ENCODE measurements at regions of chr6 and their contacts with region 1.

Region 1: DNA sequence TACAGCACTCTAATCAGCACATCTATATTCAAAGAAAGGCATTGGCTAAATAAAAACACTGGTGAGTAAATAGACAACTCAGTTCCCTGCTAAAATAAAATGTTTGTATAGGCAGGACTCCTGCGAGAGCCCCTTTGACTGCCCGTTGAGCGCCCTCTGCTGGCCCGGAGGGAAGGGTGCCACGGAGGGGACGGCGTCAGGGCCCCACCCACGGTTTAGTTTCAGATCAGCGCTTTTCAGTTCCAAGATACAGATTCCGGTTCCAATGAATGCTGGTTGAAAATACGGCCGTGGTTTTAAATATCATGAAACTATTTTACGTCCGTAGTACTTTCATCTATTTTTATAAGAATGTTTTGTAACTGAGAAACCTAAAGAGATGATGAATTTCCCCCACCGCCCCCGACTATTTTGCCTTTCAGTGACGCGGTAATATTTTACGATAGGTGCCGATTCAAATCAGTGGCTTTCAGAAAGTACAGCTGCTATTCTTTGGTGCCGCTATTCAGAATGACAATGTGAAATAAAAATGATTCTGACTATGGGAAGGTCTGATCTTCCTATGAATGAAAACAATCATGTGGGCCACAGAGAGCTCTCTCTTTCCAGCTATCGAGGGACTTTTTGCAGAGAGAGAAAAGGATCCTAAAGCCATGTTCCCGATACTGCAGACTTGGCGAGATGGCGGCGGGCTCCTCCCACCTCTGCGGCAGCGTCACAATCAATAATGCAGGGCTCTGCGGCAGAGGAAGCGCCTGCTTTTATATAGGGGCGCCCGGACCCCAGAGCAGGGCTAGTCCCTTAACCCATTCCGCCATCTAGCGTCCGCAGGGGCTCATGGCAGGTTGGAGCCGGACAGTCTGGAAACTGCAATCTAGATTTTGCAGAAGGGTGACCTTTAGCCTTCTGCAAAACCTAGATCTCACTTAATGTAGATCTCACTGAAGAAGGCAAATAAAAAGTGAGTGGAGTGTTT is 10.6 kb upstream of the CCN6 start:
- DNase-seq: peak; percentile 85 to 95 (median 91)
- ATAC-seq: peak; percentile 92
- H3K4me3 ChIP-seq: peak overlapping the region; percentile 65
- H3K4me3 Mint-ChIP-seq: peak overlapping the region; percentile 97
- H3K27ac ChIP-seq: peak overlapping the region; percentile 88 to 95
- H3K27ac Mint-ChIP-seq: peak overlapping the region; percentile 100
- H3K4me1 ChIP-seq: peaks cover 3% of the 10 kb centered on the region
- H3K4me1 Mint-ChIP-seq: peaks cover 40% of the 10 kb centered on the region
- H3K27me3 ChIP-seq: no peaks in the 10 kb centered on the region
- H3K27me3 Mint-ChIP-seq: no peaks in the 10 kb centered on the region
- CTCF ChIP-seq: peak; percentile 78

Region 2: GRCh38 chr6:111011360-111012142 is 1031.8 kb before region 1 on chr6:
- CTCF ChIA-PET with region 1: no interaction called
- POLR2A ChIA-PET with region 1: no interaction called
- intact Hi-C with region 1: loop called (anchors 10 kb)
- DNase-seq: peak in 4 of 14 experiments; percentile 3 to 64 (median 57)
- ATAC-seq: peak; percentile 82
- H3K4me3 ChIP-seq: no peak overlapping the region
- H3K4me3 Mint-ChIP-seq: no peak overlapping the region
- H3K27ac ChIP-seq: no peak overlapping the region
- H3K27ac Mint-ChIP-seq: no peak overlapping the region
- H3K4me1 ChIP-seq: no peaks in the 10 kb centered on the region
- H3K4me1 Mint-ChIP-seq: peaks cover 5% of the 10 kb centered on the region
- H3K27me3 ChIP-seq: no peaks in the 10 kb centered on the region
- H3K27me3 Mint-ChIP-seq: no peaks in the 10 kb centered on the region
- CTCF ChIP-seq: peak; percentile 78

Region 3: DNA sequence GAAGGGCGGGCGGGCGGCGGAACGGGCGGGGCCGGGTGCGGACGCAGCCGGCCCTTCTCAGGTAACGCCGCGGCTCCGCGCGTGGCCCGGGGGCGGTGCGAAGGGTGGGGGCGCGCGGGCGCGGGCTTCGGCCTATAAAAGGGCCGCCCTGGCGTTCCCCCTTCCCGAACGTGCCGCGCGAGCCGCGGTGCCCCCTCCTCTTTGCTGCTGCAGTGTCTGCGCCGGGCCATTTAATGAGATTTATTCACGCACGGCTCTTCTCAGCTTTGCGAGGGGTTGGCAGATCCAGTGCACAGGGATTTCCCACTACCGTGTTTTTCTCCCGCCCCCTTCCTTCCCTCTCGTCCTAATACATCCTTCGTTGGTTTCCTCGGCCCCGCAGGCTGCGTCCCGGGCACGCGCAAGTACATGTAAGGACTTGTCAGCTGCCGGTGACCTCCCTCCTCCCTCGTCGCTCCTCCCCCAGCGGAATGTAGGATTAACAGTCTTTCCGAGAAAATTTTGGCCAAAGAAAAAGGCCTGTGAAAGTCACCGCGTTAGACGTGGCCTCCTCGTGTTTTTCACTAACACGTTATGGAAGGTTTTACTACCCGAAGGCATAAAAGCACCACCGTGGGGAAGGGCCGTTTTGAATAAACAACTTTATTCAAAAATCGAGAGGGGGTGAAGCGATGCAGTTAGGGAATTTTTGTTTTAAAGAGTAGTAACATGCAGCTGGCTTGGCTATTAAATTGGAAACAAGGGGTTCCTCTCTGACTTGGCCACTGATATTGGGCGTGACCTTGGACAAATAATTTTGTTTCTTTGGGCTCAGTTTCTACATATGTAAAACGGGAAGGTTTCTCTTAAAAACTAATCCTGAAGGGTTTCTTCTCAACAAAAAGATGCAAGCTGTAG is 559.3 kb before region 1 on chr6:
- CTCF ChIA-PET with region 1: interaction called, 3 read pairs
- POLR2A ChIA-PET with region 1: no interaction called
- intact Hi-C with region 1: loop called (anchors 5 to 10 kb)
- DNase-seq: peak in 9 of 14 experiments; percentile 51 to 95 (median 83)
- ATAC-seq: peak; percentile 55
- H3K4me3 ChIP-seq: peak overlapping the region; percentile 69
- H3K4me3 Mint-ChIP-seq: peak overlapping the region; percentile 99
- H3K27ac ChIP-seq: peak overlapping the region; percentile 97 to 98
- H3K27ac Mint-ChIP-seq: peak overlapping the region; percentile 98
- H3K4me1 ChIP-seq: peaks cover 30% of the 10 kb centered on the region
- H3K4me1 Mint-ChIP-seq: peaks cover 60% of the 10 kb centered on the region
- H3K27me3 ChIP-seq: no peaks in the 10 kb centered on the region
- H3K27me3 Mint-ChIP-seq: no peaks in the 10 kb centered on the region
- CTCF ChIP-seq: no peak

Region 4: GRCh38 chr6:111804627-111805235 is 238.6 kb before region 1 on chr6:
- CTCF ChIA-PET with region 1: interaction called, 3 read pairs
- POLR2A ChIA-PET with region 1: interaction called, 3 read pairs
- intact Hi-C with region 1: loop called (anchors 2 to 5 kb)
- DNase-seq: peak; percentile 38 to 91 (median 54)
- ATAC-seq: peak; percentile 71
- H3K4me3 ChIP-seq: peak overlapping the region; percentile 15
- H3K4me3 Mint-ChIP-seq: peak overlapping the region; percentile 67
- H3K27ac ChIP-seq: peak overlapping the region; percentile 55 to 66
- H3K27ac Mint-ChIP-seq: peak overlapping the region; percentile 91
- H3K4me1 ChIP-seq: peaks cover 77% of the 10 kb centered on the region
- H3K4me1 Mint-ChIP-seq: peaks cover 93% of the 10 kb centered on the region
- H3K27me3 ChIP-seq: no peaks in the 10 kb centered on the region
- H3K27me3 Mint-ChIP-seq: no peaks in the 10 kb centered on the region
- CTCF ChIP-seq: no peak

Region 5: GRCh38 chr6:111861431-111861885 is 181.9 kb before region 1 on chr6:
- CTCF ChIA-PET with region 1: no interaction called
- POLR2A ChIA-PET with region 1: no interaction called
- intact Hi-C with region 1: no loop called
- DNase-seq: no peak
- ATAC-seq: no peak
- H3K4me3 ChIP-seq: no peak overlapping the region
- H3K4me3 Mint-ChIP-seq: peak overlapping the region; percentile 60
- H3K27ac ChIP-seq: no peak overlapping the region
- H3K27ac Mint-ChIP-seq: peak overlapping the region; percentile 40
- H3K4me1 ChIP-seq: peaks cover 76% of the 10 kb centered on the region
- H3K4me1 Mint-ChIP-seq: peaks cover 100% of the 10 kb centered on the region
- H3K27me3 ChIP-seq: no peaks in the 10 kb centered on the region
- H3K27me3 Mint-ChIP-seq: no peaks in the 10 kb centered on the region
- CTCF ChIP-seq: no peak

Region 6: DNA sequence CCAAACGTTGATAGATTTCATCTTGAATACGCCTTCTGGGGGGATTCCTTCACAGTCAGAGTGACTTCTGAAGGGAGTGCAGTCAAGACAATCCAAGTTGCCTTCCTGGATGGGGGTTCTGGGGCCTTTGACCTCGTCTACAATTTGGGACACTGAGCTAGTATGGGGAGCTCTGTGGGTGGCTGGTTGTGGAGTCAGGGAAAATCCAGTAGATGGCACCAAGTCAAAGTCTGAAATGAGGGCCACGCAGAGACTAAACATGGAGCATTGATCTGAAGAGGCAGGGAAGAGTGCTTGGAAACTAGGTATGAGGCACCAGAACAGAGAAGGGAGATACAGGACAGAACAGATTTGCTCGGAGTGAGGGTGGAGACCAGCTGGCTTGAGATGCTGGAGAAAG is 33.0 kb before region 1 on chr6:
- CTCF ChIA-PET with region 1: interaction called, 30 read pairs
- POLR2A ChIA-PET with region 1: interaction called, 55 read pairs
- intact Hi-C with region 1: loop called (anchors 1 kb)
- DNase-seq: peak in 7 of 14 experiments; percentile 12 to 64 (median 55)
- ATAC-seq: peak; percentile 86
- H3K4me3 ChIP-seq: no peak overlapping the region
- H3K4me3 Mint-ChIP-seq: no peak overlapping the region
- H3K27ac ChIP-seq: no peak overlapping the region
- H3K27ac Mint-ChIP-seq: no peak overlapping the region
- H3K4me1 ChIP-seq: peaks cover 6% of the 10 kb centered on the region
- H3K4me1 Mint-ChIP-seq: peaks cover 18% of the 10 kb centered on the region
- H3K27me3 ChIP-seq: no peaks in the 10 kb centered on the region
- H3K27me3 Mint-ChIP-seq: no peaks in the 10 kb centered on the region
- CTCF ChIP-seq: peak; percentile 40